Colonic mucosa (tissue), 4 donors: ENCODE measurements at regions of chr4 and their contacts with region 1.

Region 1: DNA sequence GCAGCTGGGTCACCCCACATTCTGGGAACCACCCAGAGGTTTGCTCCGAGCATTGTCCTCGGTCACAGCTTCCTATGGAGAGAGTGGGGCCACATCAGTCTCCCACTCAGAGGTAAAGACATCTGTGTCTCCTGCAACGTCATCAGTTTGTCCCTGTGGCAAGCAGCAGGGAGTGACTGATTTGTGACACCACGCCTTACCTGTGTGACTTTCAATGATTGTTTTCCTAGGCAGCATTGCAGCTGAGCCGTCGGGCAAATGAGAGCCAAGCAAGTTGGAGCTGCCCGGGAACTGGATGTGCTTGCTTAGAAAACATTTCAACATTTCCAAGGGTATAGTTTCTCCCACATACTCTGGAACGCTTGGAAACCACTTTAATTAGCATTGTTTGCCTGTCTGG is 29.7 kb upstream of the HELT start:
- DNase-seq: no peak
- H3K4me3 ChIP-seq: no peak overlapping the region
- H3K27ac ChIP-seq: no peak overlapping the region
- H3K4me1 ChIP-seq: no peaks in the 10 kb centered on the region
- H3K27me3 ChIP-seq: no peaks in the 10 kb centered on the region
- CTCF ChIP-seq: no peak

Region 2: DNA sequence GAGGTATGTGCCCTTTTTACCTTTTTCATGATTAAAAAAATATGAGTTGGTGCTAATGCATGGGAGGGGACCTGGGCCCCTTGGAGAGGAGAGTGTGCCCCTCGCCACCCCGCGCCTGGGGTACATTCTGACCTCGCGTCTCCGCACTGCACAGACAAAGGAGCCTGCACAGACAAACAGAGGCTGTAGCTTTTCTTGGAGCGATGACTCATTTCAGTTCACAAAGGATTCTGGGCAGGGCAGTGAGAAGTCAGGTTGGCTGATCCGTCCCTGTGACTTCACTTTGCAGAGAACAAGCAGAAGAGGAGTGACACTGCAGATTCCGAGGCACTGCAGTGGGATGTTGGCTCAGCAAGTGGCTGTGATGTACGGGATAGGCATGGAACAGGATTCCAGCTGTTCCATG is 1000.6 kb before region 1 on chr4:
- intact Hi-C with region 1: no loop called
- DNase-seq: peak; percentile 58
- H3K4me3 ChIP-seq: peak overlapping the region; percentile 17
- H3K27ac ChIP-seq: peak overlapping the region; percentile 30
- H3K4me1 ChIP-seq: no peaks in the 10 kb centered on the region
- H3K27me3 ChIP-seq: no peaks in the 10 kb centered on the region
- CTCF ChIP-seq: no peak

Region 3: GRCh38 chr4:184745831-184746795 is 242.5 kb before region 1 on chr4:
- intact Hi-C with region 1: loop called (anchors 5 kb)
- DNase-seq: peak; percentile 85
- H3K4me3 ChIP-seq: no peak overlapping the region
- H3K27ac ChIP-seq: peak overlapping the region; percentile 72
- H3K4me1 ChIP-seq: peaks cover 15% of the 10 kb centered on the region
- H3K27me3 ChIP-seq: no peaks in the 10 kb centered on the region
- CTCF ChIP-seq: peak; percentile 81

Region 4: DNA sequence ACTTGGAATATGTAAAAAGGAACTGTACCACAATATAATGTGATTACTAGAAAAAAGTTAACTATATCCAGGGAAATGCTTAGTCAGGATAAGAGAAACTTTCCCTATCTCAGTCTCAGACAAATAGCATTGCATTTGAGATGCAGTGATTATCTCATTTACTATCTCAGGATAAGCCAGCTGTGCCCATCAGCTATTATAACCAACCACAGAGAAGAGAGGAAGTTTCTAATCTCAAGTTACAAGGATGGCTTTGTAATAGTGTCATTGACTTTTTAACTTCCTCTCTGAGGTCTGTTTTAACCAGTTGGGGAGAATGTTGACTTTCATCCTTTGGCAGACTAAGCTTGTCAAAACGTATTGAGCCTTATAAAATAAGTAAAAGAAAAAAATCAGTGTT is 277.3 kb after region 1 on chr4:
- intact Hi-C with region 1: no loop called
- DNase-seq: no peak
- H3K4me3 ChIP-seq: no peak overlapping the region
- H3K27ac ChIP-seq: no peak overlapping the region
- H3K4me1 ChIP-seq: no peaks in the 10 kb centered on the region
- H3K27me3 ChIP-seq: no peaks in the 10 kb centered on the region
- CTCF ChIP-seq: no peak